ENCODE measurements at regions of chr1 and their contacts with region 1.

Region 1: GRCh38 chr1:154335025-154335714 is 9.8 kb downstream of the ATP8B2 start:
- DNase-seq: peak; percentile 87
- H3K4me3 ChIP-seq: no peak overlapping the region
- H3K27ac ChIP-seq: no peak overlapping the region
- H3K4me1 ChIP-seq: no peaks in the 10 kb centered on the region
- H3K27me3 ChIP-seq: no peaks in the 10 kb centered on the region
- CTCF ChIP-seq: peak; percentile 88

Region 2: DNA sequence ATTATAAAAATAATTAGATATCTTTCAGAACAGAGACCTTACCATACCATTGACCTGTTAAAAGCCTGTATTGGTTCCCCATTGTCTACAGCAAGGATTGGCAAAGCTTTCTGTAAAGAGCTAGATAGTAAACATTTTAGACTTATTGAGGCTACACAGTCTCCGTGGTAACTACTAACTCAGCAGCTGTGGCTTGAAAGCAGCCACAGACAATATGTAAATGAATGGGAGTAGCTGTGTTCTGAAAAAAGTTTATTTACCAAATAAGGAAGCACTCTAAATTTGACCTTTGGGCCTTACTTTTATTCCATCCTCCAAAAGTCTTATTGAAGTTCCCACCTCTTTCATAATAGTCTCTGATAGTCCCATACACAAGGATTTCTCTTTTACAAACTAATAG is 220.0 kb before region 1 on chr1:
- intact Hi-C with region 1: no loop called
- DNase-seq: no peak
- H3K4me3 ChIP-seq: no peak overlapping the region
- H3K27ac ChIP-seq: no peak overlapping the region
- H3K4me1 ChIP-seq: no peaks in the 10 kb centered on the region
- H3K27me3 ChIP-seq: no peaks in the 10 kb centered on the region
- CTCF ChIP-seq: no peak

Region 3: GRCh38 chr1:154198756-154199562 is 136.2 kb before region 1 on chr1:
- intact Hi-C with region 1: loop called (anchors 10 kb)
- DNase-seq: peak; percentile 40
- H3K4me3 ChIP-seq: no peak overlapping the region
- H3K27ac ChIP-seq: no peak overlapping the region
- H3K4me1 ChIP-seq: no peaks in the 10 kb centered on the region
- H3K27me3 ChIP-seq: no peaks in the 10 kb centered on the region
- CTCF ChIP-seq: peak; percentile 30

Region 4: DNA sequence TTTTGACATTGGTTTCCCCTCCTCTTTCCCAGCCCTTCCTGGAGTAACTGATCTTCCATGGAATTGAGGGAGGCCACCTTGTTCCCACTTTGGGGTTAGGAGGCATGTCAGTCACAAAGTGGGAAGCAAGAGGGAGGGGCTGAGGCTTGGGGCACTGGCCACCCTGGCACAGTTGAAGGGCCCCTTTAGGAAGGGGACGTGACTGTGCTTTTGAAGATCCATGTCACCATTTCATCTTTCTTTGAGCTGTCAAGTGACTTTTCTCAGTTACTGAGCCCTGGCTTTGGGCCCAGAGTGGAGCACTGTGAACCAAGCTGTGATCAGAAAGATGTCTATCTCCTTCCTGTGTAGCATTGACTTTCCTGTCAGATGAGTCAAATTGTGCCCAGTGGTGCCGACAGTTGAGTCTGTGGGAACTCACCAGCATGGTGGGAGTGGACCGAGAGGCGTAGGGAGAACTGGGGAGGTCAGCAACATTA is 128.4 kb after region 1 on chr1:
- intact Hi-C with region 1: loop called (anchors 10 kb)
- DNase-seq: peak; percentile 34
- H3K4me3 ChIP-seq: no peak overlapping the region
- H3K27ac ChIP-seq: peak overlapping the region; percentile 39
- H3K4me1 ChIP-seq: no peaks in the 10 kb centered on the region
- H3K27me3 ChIP-seq: no peaks in the 10 kb centered on the region
- CTCF ChIP-seq: no peak